Caco-2 (cell line): ENCODE measurements at regions of chrX and their contacts with region 1.

Region 1: DNA sequence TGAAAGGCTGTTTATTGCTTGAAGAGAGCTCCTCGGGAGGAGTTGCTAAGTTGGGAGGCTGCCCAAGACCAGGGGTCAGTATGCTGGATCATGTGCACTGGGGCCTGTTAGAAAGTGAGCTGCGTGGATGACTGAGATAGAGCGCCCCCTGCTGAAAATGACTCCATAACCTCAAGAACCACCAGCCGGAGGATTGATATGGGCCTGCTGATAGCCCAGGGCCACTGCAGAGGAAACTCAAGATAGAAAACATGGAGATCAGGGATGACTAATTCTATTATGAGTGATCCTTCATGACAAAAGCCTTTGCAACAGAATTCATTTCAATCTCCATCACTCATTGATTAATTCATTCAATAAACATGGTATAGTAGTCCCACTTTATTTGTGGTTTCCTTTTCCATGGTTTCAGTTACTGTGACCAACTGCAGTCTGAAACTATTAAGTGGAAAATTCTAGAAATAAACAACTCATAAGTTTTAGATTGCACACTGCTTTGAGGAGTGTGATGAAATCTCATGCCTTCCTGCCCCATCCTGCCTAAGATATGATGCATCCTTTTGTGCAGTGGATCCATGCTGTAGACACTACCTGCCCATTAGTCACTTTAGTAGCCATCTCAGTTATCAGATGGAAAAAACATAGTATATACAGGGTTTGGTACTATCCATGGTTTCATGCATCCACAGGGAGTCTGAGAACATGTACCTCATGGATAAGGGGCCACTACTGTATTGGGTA is 126.7 kb upstream of the MBNL3 start:
- DNase-seq: peak; percentile 69 to 76
- H3K4me3 ChIP-seq: no peak overlapping the region
- H3K4me3 Mint-ChIP-seq: no peak overlapping the region
- H3K27ac Mint-ChIP-seq: no peak overlapping the region
- H3K4me1 ChIP-seq: peaks cover 22% of the 10 kb centered on the region
- H3K4me1 Mint-ChIP-seq: peaks cover 5% of the 10 kb centered on the region
- H3K27me3 ChIP-seq: no peaks in the 10 kb centered on the region
- H3K27me3 Mint-ChIP-seq: no peaks in the 10 kb centered on the region
- CTCF ChIP-seq: peak; percentile 33 to 43

Region 2: DNA sequence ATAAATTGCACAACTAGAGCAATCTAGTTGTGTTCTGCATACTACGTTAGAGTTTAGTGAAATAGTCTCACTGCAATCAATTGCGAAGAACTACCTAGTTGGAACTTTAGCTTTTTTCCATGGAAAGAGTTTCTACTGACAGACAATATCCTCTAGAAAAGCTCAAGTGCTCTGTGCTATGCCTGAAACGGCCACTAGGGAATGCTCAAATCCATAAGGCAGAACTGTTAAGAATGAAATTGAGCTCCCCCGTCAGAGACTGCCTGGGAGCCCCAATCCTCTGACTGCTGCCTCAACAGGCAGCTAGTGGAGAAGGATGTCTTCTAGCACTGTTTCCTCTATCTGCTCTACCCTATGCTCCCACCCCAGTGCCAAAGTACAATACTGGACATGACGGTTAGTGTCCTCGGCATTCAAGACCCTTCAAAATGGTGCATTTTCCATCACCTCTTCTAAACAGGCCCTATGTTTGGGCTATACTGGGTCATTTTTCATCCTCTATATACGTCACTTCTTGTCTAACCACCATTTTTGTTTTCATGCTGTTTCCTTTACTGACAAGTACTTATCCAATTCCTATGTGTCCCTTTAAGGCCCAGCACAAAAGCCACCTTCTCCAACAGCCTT is 523.0 kb before region 1 on chrX:
- CTCF ChIA-PET with region 1: interaction called, 7 read pairs
- POLR2A ChIA-PET with region 1: no interaction called
- intact Hi-C with region 1: loop called (anchors 5 kb)
- DNase-seq: peak; percentile 47 to 57
- H3K4me3 ChIP-seq: no peak overlapping the region
- H3K4me3 Mint-ChIP-seq: no peak overlapping the region
- H3K27ac Mint-ChIP-seq: no peak overlapping the region
- H3K4me1 ChIP-seq: no peaks in the 10 kb centered on the region; the same call in 1 of the 2 replicates
- H3K4me1 Mint-ChIP-seq: peaks cover 6% of the 10 kb centered on the region
- H3K27me3 ChIP-seq: no peaks in the 10 kb centered on the region
- H3K27me3 Mint-ChIP-seq: no peaks in the 10 kb centered on the region
- CTCF ChIP-seq: peak; percentile 62 to 65

Region 3: DNA sequence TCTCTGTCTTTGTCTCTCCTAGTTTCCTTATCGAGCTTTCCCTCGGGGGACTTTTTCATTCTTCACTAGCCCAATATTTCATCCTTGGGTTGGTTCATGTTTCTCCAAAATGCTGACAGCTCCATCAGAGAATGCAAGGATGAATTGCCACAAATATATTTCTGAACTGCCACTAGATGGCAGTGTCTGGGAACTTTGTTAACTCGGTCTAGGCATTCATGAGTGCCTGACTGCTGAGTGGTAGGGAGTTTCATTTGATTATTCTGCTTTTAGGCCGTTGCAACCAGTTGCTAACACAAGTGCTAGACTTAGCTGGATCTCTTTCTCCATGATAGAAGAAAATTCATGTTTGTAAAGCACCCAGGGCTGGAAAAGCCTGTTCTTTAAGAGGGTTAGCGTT is 322.8 kb before region 1 on chrX:
- CTCF ChIA-PET with region 1: interaction called, 11 read pairs
- POLR2A ChIA-PET with region 1: no interaction called
- intact Hi-C with region 1: loop called (anchors 1 kb)
- DNase-seq: peak; percentile 33 to 50
- H3K4me3 ChIP-seq: no peak overlapping the region
- H3K4me3 Mint-ChIP-seq: no peak overlapping the region
- H3K27ac Mint-ChIP-seq: no peak overlapping the region
- H3K4me1 ChIP-seq: peaks cover 6% of the 10 kb centered on the region
- H3K4me1 Mint-ChIP-seq: no peaks in the 10 kb centered on the region
- H3K27me3 ChIP-seq: no peaks in the 10 kb centered on the region
- H3K27me3 Mint-ChIP-seq: no peaks in the 10 kb centered on the region
- CTCF ChIP-seq: peak; percentile 22 to 35

Region 4: GRCh38 chrX:132413459-132413858 is 202.1 kb before region 1 on chrX:
- CTCF ChIA-PET with region 1: interaction called, 10 read pairs
- POLR2A ChIA-PET with region 1: no interaction called
- intact Hi-C with region 1: loop called (anchors 5 kb)
- DNase-seq: peak; percentile 74
- H3K4me3 ChIP-seq: peak overlapping the region; percentile 32
- H3K4me3 Mint-ChIP-seq: peak overlapping the region; percentile 73
- H3K27ac Mint-ChIP-seq: peak overlapping the region; percentile 93
- H3K4me1 ChIP-seq: peaks cover 28% of the 10 kb centered on the region
- H3K4me1 Mint-ChIP-seq: peaks cover 8% of the 10 kb centered on the region
- H3K27me3 ChIP-seq: no peaks in the 10 kb centered on the region
- H3K27me3 Mint-ChIP-seq: no peaks in the 10 kb centered on the region
- CTCF ChIP-seq: peak; percentile 34 to 43

Region 5: GRCh38 chrX:132631579-132632232 is 16.1 kb after region 1 on chrX:
- CTCF ChIA-PET with region 1: interaction called, 11 read pairs
- POLR2A ChIA-PET with region 1: no interaction called
- intact Hi-C with region 1: no loop called
- DNase-seq: peak in 1 of 2 experiments; percentile 16
- H3K4me3 ChIP-seq: no peak overlapping the region
- H3K4me3 Mint-ChIP-seq: no peak overlapping the region
- H3K27ac Mint-ChIP-seq: no peak overlapping the region
- H3K4me1 ChIP-seq: no peaks in the 10 kb centered on the region
- H3K4me1 Mint-ChIP-seq: no peaks in the 10 kb centered on the region
- H3K27me3 ChIP-seq: no peaks in the 10 kb centered on the region
- H3K27me3 Mint-ChIP-seq: no peaks in the 10 kb centered on the region
- CTCF ChIP-seq: peak; percentile 32 to 35